Calu3 (cell line): ENCODE measurements at regions of chr6 and their contacts with region 1.

Region 1: GRCh38 chr6:21987501-21987957 is 309.3 kb downstream of the PRL start:
- DNase-seq: peak; percentile 87
- H3K4me3 Mint-ChIP-seq: peak overlapping the region; percentile 28
- H3K27ac Mint-ChIP-seq: peak overlapping the region; percentile 72
- H3K4me1 Mint-ChIP-seq: peaks cover 37% of the 10 kb centered on the region
- H3K27me3 Mint-ChIP-seq: no peaks in the 10 kb centered on the region
- CTCF ChIP-seq: no peak

Region 2: DNA sequence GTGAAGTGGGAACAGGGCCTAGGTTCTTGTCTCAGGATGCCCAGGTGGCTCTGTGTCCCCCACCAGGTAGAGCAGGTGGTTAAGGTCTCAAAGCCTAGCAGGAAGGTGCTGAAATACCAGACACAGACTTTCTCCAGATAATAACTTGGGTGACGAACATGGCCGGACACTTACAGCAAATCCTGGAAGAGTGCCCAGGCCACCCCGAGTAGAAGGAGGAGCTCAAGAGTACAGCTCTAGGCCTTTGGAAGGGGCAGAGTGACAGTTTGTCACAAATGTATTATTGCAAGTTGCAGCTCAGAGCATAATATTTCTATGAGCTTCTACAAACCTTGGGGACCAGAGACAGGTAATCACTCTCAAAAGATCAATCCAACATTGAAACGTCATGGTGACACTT is 645.6 kb before region 1 on chr6:
- CTCF ChIA-PET with region 1: interaction called, 11 read pairs
- intact Hi-C with region 1: no loop called
- DNase-seq: no peak
- H3K4me3 Mint-ChIP-seq: no peak overlapping the region
- H3K27ac Mint-ChIP-seq: no peak overlapping the region
- H3K4me1 Mint-ChIP-seq: no peaks in the 10 kb centered on the region
- H3K27me3 Mint-ChIP-seq: no peaks in the 10 kb centered on the region
- CTCF ChIP-seq: no peak